CD8-positive, alpha-beta T cell (primary cell): ENCODE measurements at regions of chr6 and their contacts with region 1.

Region 1: DNA sequence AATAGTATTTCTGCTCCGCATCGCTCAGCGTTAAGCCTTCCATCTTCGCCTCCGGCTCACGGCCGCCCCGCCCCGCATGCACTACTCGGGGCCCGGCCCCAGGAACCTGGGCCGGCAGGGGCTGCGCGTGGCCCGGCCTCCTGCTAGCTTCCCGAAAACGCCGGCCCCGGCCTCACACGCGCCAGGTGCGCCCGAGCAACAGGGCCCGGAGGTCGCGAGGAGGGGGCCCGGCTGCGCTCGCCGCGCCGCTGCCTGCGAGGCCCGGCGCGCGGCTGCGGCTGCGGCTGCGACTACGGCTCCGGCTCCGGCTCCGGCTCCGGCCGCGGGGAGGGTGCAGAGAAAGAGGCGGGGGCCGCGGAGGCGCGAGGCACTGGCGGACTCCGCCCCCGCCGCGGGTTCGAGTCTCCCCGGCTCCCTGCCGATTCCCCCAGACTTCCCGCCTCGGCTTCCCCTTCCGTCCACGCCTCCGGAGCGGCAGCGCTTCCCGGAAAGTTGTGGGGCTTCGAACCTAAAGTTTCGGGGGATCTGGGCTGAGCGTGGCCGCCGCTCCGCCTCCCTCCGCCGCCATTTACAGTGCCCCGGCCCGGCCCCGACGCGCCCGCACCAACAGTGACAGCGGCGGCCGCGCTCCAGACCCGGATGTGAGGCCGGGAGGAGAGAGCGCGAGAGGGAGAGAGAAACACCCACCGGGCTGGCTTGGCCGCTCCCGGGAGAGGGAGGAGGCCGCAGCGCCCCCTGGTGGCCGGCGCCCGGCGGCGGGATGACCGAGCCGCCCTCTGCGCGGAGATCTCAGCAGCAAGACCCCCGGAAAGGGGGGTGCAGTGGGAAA is at the start of gene REPS1:
- DNase-seq: peak; percentile 79 to 97 (median 90)
- ATAC-seq: peak; percentile 88
- H3K4me3 ChIP-seq: peak within 1 kb of the TSS; percentile 74 to 79
- H3K4me3 Mint-ChIP-seq: peak within 1 kb of the TSS; percentile 86
- H3K27ac ChIP-seq: peak within 1 kb of the TSS; percentile 68 to 81
- H3K27ac Mint-ChIP-seq: peak within 1 kb of the TSS; percentile 85
- H3K4me1 ChIP-seq: peaks cover 42% of the 10 kb centered on the region
- H3K4me1 Mint-ChIP-seq: peaks cover 6% of the 10 kb centered on the region
- H3K27me3 ChIP-seq: no peaks in the 10 kb centered on the region
- H3K27me3 Mint-ChIP-seq: no peaks in the 10 kb centered on the region
- CTCF ChIP-seq: peak; percentile 99
- total RNA-seq, gene REPS1: 50.4 to 60.3 TPM

Region 2: DNA sequence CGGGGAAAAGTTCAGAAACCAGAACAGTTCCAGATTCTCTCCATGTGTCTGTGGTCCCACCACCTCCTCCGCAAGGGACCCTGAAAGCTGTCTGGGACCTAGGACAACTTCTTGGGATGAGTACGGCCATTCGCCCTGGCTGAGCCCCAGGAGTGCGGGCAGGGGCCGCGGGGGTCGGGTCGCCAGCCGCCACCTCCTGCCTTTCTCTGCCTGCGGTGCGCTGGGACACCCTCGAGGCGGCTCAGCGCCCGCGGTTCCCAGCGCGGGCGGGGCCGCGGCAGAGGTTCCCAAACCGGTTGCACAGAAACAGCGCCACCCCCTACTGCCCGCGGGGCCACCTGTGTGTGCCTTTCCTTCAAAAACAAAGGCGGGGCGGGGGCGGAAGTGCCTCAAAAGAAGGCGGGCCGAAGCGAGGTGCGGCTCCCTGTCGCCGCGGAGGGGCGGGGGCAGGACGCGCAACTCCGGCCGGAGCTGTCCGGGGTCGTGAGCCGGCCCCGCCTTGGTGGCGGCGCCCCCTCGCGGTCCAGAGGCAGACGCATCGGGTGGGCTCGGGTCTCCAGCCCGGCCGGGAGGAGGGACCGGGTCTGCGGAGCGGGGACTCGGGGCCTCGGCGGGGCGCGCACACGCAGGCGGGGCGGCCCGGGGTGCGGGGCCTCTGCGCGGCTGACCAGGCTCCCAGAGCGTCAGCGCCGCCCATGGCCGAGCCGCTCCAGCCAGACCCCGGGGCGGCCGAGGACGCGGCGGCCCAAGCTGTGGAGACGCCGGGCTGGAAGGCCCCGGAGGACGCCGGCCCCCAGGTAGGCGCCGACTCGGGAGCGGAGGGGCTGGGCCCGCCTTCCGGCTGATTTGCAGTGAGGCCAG is 583.8 kb before region 1 on chr6 and contains the start of gene HEBP2:
- CTCF ChIA-PET with region 1: no interaction called
- POLR2A ChIA-PET with region 1: no interaction called
- intact Hi-C with region 1: loop called in 1 of 2 experiments (anchors 10 kb)
- DNase-seq: peak; percentile 85 to 96 (median 93)
- ATAC-seq: peak; percentile 91
- H3K4me3 ChIP-seq: peak within 1 kb of the TSS; percentile 63 to 85
- H3K4me3 Mint-ChIP-seq: peak within 1 kb of the TSS; percentile 90
- H3K27ac ChIP-seq: peak within 1 kb of the TSS; percentile 63 to 85
- H3K27ac Mint-ChIP-seq: peak within 1 kb of the TSS; percentile 97
- H3K4me1 ChIP-seq: peaks cover 15% of the 10 kb centered on the region
- H3K4me1 Mint-ChIP-seq: peaks cover 23% of the 10 kb centered on the region
- H3K27me3 ChIP-seq: no peaks in the 10 kb centered on the region
- H3K27me3 Mint-ChIP-seq: no peaks in the 10 kb centered on the region
- CTCF ChIP-seq: peak; percentile 23
- total RNA-seq, gene HEBP2: 64.6 to 69.1 TPM

Region 3: DNA sequence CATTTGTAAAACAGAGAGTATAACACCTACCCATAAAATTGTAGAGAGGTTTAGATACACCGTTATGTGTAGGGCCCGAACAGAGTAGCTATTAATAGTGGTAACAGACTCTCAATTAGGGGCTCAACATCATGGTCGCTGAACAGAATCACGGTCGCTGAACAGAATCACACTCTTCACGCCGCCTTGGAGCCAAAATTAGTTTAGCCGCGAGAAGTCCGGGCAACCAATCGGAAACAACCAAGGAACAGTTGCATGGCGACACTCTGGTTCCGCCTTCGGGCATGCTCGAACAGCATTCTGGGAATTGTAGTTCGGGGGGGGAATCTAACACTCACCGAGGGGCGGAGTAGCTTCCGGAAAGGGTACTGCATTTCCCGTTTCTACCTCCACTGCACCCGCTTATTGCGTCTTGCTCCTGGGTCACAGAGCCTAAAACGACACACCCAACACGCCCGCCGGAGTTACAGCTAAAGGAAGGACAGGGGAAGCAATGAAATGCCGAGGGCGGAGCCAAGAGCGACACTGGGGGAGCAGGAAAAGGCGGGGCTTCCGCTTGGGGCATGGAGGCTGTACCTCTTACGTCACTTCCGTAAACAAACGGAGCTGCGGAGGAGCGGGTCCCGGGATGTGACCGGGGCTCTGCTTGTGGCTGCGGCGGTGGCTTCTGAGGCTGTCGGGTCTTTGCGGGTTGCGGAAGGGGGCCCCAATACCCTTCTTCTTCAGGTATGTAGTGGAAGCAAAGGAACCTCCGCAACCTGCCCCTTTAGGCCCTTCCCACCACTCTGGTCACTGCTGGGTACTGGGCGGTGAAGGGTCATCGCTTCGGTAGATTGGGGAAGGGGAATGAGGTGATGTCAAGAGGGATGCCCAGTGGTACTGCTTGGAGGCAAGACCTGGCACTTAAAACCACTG is 214.4 kb before region 1 on chr6 and contains the start of gene CCDC28A:
- CTCF ChIA-PET with region 1: no interaction called
- POLR2A ChIA-PET with region 1: no interaction called
- intact Hi-C with region 1: loop called (anchors 1 to 5 kb)
- DNase-seq: peak; percentile 87 to 97 (median 92)
- ATAC-seq: peak; percentile 84
- H3K4me3 ChIP-seq: peak within 1 kb of the TSS; percentile 68 to 90
- H3K4me3 Mint-ChIP-seq: peak within 1 kb of the TSS; percentile 100
- H3K27ac ChIP-seq: peak within 1 kb of the TSS; percentile 88 to 96
- H3K27ac Mint-ChIP-seq: peak within 1 kb of the TSS; percentile 100
- H3K4me1 ChIP-seq: peaks cover 19% of the 10 kb centered on the region
- H3K4me1 Mint-ChIP-seq: peaks cover 33% of the 10 kb centered on the region
- H3K27me3 ChIP-seq: no peaks in the 10 kb centered on the region
- H3K27me3 Mint-ChIP-seq: no peaks in the 10 kb centered on the region
- CTCF ChIP-seq: no peak
- total RNA-seq, gene CCDC28A: 38.2 to 39.4 TPM

Region 4: DNA sequence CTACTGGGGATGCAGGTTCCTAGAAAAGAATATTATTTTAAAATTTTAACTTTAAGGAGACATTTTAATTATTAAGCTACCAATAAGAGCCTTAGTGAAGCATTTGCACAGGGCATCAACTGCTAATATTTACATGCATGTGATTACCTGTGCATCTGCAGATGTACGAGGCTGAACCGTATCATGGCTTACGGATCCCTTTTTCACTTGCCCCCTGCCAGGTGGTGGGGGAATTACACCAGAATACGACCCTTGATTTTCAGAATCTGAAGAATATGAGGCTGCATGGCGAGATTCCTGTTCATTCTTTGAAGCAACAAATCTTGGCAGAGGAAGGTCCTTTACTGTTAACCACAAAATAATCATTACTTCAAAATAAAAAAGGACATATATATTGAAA is 42.5 kb before region 1 on chr6:
- CTCF ChIA-PET with region 1: interaction called, 3 read pairs
- POLR2A ChIA-PET with region 1: interaction called, 3 read pairs
- intact Hi-C with region 1: loop called (anchors 5 kb)
- DNase-seq: peak in 3 of 9 experiments; percentile 12 to 31 (median 27)
- ATAC-seq: no peak
- H3K4me3 ChIP-seq: no peak overlapping the region
- H3K4me3 Mint-ChIP-seq: no peak overlapping the region
- H3K27ac ChIP-seq: no peak overlapping the region
- H3K27ac Mint-ChIP-seq: peak overlapping the region; percentile 37
- H3K4me1 ChIP-seq: peaks cover 14% of the 10 kb centered on the region
- H3K4me1 Mint-ChIP-seq: peaks cover 44% of the 10 kb centered on the region
- H3K27me3 ChIP-seq: no peaks in the 10 kb centered on the region
- H3K27me3 Mint-ChIP-seq: no peaks in the 10 kb centered on the region
- CTCF ChIP-seq: no peak

Region 5: DNA sequence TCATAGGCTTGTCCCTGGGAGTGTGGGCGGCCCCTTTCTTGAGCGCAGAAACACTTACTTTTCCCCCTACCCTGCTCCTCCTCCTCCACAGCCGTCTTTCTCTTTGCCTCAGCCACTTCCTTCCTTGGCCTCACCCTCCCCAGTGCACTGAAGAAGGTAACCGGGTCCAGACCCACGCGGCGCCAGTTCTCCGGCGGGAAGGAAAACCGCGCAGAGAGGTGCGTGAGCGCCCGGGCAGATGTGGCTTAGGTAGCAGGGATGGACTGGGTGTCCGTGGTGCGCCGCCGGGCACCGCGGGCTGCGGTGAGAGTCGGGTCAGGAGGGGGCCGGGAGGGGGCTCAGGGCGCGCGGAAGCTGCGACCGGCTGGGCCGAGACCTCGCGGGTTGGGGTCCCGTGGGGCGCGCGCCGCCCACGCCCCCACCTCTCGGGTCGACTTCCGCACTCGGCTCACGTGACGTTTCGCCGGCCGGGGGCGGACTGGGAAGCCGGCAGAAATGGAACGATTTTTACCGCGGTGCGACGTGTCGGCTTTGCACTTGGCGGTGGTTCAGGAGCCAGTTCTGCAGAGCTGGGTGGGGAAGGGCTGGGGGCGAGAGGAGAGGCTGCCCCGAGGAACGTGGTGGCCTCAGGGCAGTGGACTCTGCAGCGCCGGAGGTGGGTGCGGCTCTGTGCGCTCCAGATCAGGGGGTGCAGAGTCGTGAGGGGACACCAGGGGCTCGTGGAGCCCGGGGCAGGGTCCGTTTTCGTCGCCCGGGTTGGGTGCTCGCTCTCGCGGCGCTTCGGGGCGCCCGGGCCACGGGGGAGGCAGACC is 41.0 kb after region 1 on chr6 and contains the start of gene ABRACL:
- CTCF ChIA-PET with region 1: interaction called, 6 read pairs
- POLR2A ChIA-PET with region 1: interaction called, 15 read pairs
- intact Hi-C with region 1: loop called (anchors 1 to 2 kb)
- DNase-seq: peak; percentile 38 to 89 (median 74)
- ATAC-seq: peak; percentile 88
- H3K4me3 ChIP-seq: peak within 1 kb of the TSS; percentile 93 to 99
- H3K4me3 Mint-ChIP-seq: no peak within 1 kb of the TSS
- H3K27ac ChIP-seq: peak within 1 kb of the TSS; percentile 86 to 90
- H3K27ac Mint-ChIP-seq: peak within 1 kb of the TSS; percentile 96
- H3K4me1 ChIP-seq: peaks cover 24% of the 10 kb centered on the region
- H3K4me1 Mint-ChIP-seq: peaks cover 31% of the 10 kb centered on the region
- H3K27me3 ChIP-seq: no peaks in the 10 kb centered on the region
- H3K27me3 Mint-ChIP-seq: no peaks in the 10 kb centered on the region
- CTCF ChIP-seq: no peak
- total RNA-seq, gene ABRACL: 30.4 to 30.5 TPM

Region 6: DNA sequence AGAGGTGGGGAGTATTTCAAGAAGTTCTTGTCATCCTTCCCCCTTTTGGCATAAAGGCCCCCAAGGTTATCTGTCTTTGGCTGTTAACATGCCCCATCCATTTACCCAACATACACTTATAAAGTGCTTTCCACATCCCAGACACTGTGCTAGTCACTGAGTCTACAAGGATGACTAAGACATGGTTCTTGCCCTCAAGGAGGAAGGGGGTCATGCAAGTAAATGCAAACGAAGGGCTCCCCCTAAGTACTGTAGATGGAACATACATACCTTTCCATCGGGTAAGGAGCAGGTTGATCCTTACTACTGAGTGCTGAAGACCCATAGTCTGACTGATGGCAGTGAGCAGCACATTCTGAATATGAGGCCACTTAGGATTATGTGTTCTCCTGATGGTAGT is 185.3 kb after region 1 on chr6:
- CTCF ChIA-PET with region 1: interaction called, 4 read pairs
- POLR2A ChIA-PET with region 1: interaction called, 3 read pairs
- intact Hi-C with region 1: loop called (anchors 1 to 5 kb)
- DNase-seq: peak in 4 of 9 experiments; percentile 32 to 74 (median 50)
- ATAC-seq: peak; percentile 84
- H3K4me3 ChIP-seq: no peak overlapping the region
- H3K4me3 Mint-ChIP-seq: peak overlapping the region; percentile 40
- H3K27ac ChIP-seq: peak overlapping the region in 1 of 2 experiments; percentile 34
- H3K27ac Mint-ChIP-seq: peak overlapping the region; percentile 80
- H3K4me1 ChIP-seq: peaks cover 92% of the 10 kb centered on the region
- H3K4me1 Mint-ChIP-seq: peaks cover 93% of the 10 kb centered on the region
- H3K27me3 ChIP-seq: no peaks in the 10 kb centered on the region
- H3K27me3 Mint-ChIP-seq: no peaks in the 10 kb centered on the region
- CTCF ChIP-seq: no peak